Ovary (tissue), 10 donors: ENCODE measurements at regions of chr1 and their contacts with region 1.

Region 1: DNA sequence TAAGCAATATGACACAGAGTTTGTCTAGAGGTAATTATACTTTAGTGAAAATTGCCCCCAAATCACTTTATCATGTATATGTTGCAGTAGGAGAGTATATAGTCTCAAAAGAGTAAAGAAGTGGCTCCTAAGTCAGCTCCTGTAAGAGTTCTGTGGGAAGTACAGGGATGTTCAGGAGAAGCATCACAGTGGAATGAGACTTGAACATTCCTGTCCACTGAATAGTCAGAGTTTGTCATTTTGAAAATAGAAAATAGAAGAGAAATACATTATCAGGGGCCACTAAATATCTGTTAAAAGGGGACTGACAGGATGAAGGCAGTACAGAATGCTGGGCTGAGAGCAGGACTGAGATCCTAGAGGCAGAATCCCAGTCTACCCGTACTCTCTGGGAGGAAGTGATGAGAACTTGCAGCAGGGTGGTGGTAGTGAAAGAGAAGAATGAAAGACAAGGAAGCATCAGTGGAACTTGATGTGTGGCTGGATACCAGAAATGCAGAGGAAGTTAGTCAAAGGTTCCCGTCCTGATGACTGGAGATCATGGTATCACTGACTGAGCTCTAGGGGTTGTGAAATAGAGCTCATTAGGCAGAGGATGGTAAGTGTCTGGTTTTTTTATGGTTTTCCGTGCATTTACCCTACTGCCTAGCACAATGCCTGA is 153.4 kb downstream of the FMN2 start:
- DNase-seq: no peak
- H3K4me3 ChIP-seq: no peak overlapping the region
- H3K27ac ChIP-seq: no peak overlapping the region
- H3K4me1 ChIP-seq: no peaks in the 10 kb centered on the region
- H3K27me3 ChIP-seq: no peaks in the 10 kb centered on the region
- CTCF ChIP-seq: no peak
- EP300 ChIP-seq: no peak
- POLR2A ChIP-seq: no peak

Region 2: GRCh38 chr1:240271081-240271480 is 26.0 kb after region 1 on chr1:
- intact Hi-C with region 1: loop called in 1 of 4 experiments (anchors 1 kb)
- DNase-seq: no peak
- H3K4me3 ChIP-seq: no peak overlapping the region
- H3K27ac ChIP-seq: no peak overlapping the region
- H3K4me1 ChIP-seq: no peaks in the 10 kb centered on the region
- H3K27me3 ChIP-seq: no peaks in the 10 kb centered on the region
- CTCF ChIP-seq: no peak
- EP300 ChIP-seq: no peak
- POLR2A ChIP-seq: no peak